ENCODE measurements at regions of chr14 and their contacts with region 1.

Region 1: GRCh38 chr14:76876076-76876475 is 49.9 kb downstream of the LRRC74A start:
- DNase-seq: peak; percentile 23 to 76
- H3K4me3 ChIP-seq: no peak overlapping the region
- H3K27ac ChIP-seq: no peak overlapping the region
- H3K4me1 ChIP-seq: peaks cover 0 to 3% (median 0%) of the 10 kb centered on the region in 4 experiments; a peak in 1 of 7 replicates
- H3K27me3 ChIP-seq: no peaks in the 10 kb centered on the region; a peak in 2 of 7 replicates
- CTCF ChIP-seq: peak; percentile 97
- EP300 ChIP-seq: no peak
- POLR2A ChIP-seq: no peak
- RAD21 ChIP-seq: peak; percentile 100

Region 2: GRCh38 chr14:76863724-76864407 is 12.2 kb before region 1 on chr14:
- CTCF ChIA-PET with region 1: interaction called, 120 read pairs
- POLR2A ChIA-PET with region 1: no interaction called
- DNase-seq: no peak
- H3K4me3 ChIP-seq: no peak overlapping the region
- H3K27ac ChIP-seq: no peak overlapping the region
- H3K4me1 ChIP-seq: peaks cover 0 to 12% (median 8%) of the 10 kb centered on the region in 4 experiments; a peak in 6 of 7 replicates
- H3K27me3 ChIP-seq: no peaks in the 10 kb centered on the region; a peak in 1 of 7 replicates
- CTCF ChIP-seq: no peak
- EP300 ChIP-seq: no peak
- POLR2A ChIP-seq: no peak
- RAD21 ChIP-seq: no peak

Region 3: DNA sequence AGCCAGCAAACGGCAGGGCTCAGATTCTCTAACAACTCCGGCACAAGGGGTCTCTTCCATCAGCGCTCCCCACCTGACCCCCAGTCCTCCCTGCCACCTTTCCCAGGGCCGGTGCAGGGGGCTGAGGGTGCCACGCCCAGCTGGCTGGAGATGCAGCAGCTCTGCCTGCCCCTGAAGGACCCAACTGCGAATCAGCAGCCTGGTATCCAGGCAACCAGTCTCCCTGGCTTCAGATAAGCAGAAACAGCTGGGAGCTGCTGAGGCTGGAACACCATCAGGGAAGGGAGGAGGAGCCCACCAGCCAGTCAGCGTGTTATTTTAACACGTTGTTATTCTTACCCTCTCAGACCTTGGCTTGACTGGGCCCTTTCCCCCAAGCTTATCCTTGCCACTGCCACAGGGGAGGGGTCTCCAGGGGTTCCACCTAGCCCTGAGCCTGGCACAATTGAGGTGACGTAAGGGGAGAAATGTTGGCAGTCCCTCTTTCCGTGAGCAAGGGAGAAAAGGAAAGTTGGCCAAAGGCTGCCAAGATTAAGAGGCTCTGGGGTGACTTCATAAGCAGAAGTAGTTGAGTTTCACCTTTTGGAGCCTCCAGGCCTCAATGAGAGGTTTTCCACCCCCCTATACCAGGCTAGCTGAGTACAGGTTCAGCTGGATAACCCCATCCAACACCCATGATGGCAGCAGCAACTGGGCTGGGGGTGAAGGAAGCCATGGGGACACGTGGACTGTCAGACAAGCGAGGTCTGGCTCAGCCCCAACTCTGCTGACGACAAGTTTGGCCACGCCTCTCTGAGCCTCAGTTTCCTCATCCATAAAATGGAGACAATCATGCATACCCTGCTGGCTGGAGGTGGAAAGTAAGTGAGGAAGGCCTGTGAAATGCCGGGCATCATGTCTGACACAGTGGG is 61.4 kb after region 1 on chr14:
- CTCF ChIA-PET with region 1: interaction called, 12 read pairs
- POLR2A ChIA-PET with region 1: no interaction called
- DNase-seq: no peak
- H3K4me3 ChIP-seq: no peak overlapping the region
- H3K27ac ChIP-seq: peak overlapping the region; percentile 10; the same call in 1 of the 2 replicates
- H3K4me1 ChIP-seq: peaks cover 0 to 29% (median 16%) of the 10 kb centered on the region in 4 experiments; a peak in 6 of 7 replicates
- H3K27me3 ChIP-seq: no peaks in the 10 kb centered on the region
- CTCF ChIP-seq: no peak
- EP300 ChIP-seq: no peak
- POLR2A ChIP-seq: no peak
- RAD21 ChIP-seq: no peak

Region 4: GRCh38 chr14:76985540-76986230 is 109.6 kb after region 1 on chr14:
- CTCF ChIA-PET with region 1: interaction called, 13 read pairs
- POLR2A ChIA-PET with region 1: no interaction called
- DNase-seq: peak in 1 of 2 experiments; percentile 47
- H3K4me3 ChIP-seq: no peak overlapping the region
- H3K27ac ChIP-seq: no peak overlapping the region
- H3K4me1 ChIP-seq: peaks cover 8 to 23% (median 13%) of the 10 kb centered on the region in 4 experiments
- H3K27me3 ChIP-seq: no peaks in the 10 kb centered on the region
- CTCF ChIP-seq: no peak
- EP300 ChIP-seq: no peak
- POLR2A ChIP-seq: no peak
- RAD21 ChIP-seq: no peak

Region 5: GRCh38 chr14:77053046-77053841 is 177.2 kb after region 1 on chr14:
- CTCF ChIA-PET with region 1: interaction called, 258 read pairs
- POLR2A ChIA-PET with region 1: no interaction called
- DNase-seq: peak; percentile 70 to 93
- H3K4me3 ChIP-seq: no peak overlapping the region
- H3K27ac ChIP-seq: no peak overlapping the region
- H3K4me1 ChIP-seq: peaks cover 0 to 12% (median 7%) of the 10 kb centered on the region in 4 experiments; a peak in 5 of 7 replicates
- H3K27me3 ChIP-seq: no peaks in the 10 kb centered on the region
- CTCF ChIP-seq: peak; percentile 89 to 98 (median 98)
- EP300 ChIP-seq: peak in 1 of 2 experiments; percentile 70; a peak in 1 of 3 replicates
- POLR2A ChIP-seq: no peak
- RAD21 ChIP-seq: peak; percentile 97 to 99

Region 6: GRCh38 chr14:77124345-77125280 is 248.5 kb after region 1 on chr14:
- CTCF ChIA-PET with region 1: interaction called, 20 read pairs
- POLR2A ChIA-PET with region 1: no interaction called
- DNase-seq: peak in 1 of 2 experiments; percentile 81
- H3K4me3 ChIP-seq: peak overlapping the region; percentile 62 to 79 (median 68)
- H3K27ac ChIP-seq: no peak overlapping the region
- H3K4me1 ChIP-seq: peaks cover 20 to 36% (median 24%) of the 10 kb centered on the region in 4 experiments
- H3K27me3 ChIP-seq: peaks cover 0 to 2% (median 0%) of the 10 kb centered on the region in 4 experiments; a peak in 1 of 7 replicates
- CTCF ChIP-seq: peak; percentile 66 to 78 (median 68)
- EP300 ChIP-seq: no peak
- POLR2A ChIP-seq: peak in 1 of 2 experiments; percentile 30; a peak in 1 of 3 replicates
- RAD21 ChIP-seq: peak; percentile 33 to 65; a peak in 3 of 4 replicates

Measured in H1 (cell line).